ENCODE measurements at regions of chr18 and their contacts with region 1.

Region 1: DNA sequence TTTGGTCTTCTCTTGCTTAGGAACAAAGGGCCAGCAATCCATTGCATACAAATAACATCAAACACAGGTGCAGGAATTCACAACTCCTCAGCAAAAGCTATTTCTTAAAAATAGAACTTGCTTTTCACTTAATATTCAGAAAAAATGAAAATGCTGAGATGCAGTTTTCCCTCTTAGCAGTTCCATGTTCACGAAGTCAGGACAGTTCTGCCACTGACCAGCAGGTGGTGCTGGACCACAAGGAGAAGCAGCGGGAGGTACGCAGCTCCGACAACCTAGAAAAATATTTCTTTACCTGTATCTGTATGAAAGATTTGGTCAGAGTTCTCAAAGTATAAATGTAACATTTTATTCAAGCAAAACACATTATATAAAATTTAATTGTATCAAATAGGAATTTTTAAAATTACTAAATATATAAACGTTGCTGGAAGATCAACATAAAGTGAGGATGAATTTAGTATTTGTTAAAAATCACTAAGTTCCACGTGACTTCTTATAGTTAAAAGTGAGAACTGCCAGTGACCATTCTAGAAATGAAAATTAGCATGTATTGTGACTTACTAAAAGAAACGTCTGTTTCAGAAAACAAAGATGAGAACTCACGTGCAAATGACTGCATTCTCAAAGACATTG is 48.8 kb downstream of the ADNP2 start:
- DNase-seq: peak; percentile 51
- H3K4me3 ChIP-seq: no peak overlapping the region
- H3K27ac ChIP-seq: no peak overlapping the region
- H3K27me3 ChIP-seq: no peaks in the 10 kb centered on the region
- CTCF ChIP-seq: peak; percentile 97

Region 2: DNA sequence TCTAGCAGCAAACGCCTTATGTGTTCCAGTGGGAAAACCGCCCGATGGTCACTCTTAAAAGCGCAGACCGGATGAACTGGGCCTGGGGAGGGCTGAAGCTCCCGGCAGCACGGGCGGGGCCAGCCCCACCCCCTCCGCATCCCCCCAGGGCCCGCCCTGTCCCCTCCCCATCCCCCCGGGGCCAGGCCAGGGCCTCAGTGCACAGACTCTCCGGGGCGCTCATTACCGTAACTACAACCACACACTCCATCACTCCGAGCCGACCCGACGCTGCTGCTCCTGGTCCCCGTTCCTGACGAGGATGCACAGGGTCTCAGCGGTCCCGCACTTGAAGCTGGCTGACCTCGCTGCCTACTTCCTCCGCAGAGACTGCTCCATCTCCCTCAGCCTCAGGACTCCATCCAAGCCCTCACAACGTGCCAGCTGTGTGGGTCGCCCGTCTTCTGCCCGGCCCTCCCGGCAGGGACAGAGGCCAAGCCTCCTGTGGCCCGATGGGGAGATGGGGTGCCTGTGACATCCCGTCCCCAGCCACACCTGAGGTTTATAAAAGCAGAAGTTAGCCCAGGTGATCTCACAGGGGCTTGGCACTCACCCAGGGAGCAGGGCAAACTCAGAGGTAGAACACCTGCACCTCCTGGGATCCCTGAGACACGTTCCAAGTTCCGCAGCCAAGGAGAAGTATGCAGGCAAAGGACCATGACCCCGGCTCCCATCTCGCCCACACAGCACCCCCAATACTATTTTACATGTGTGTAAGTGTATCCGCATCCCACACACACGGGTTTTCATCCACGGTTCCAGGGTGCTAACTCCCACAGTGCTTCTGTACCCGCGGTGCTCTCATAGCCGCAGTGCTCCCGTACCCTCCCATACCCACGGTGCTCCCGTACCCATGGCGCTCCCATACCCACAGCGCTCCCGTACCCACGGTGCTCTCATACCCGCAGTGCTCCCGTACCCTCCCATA is 242.4 kb before region 1 on chr18:
- CTCF ChIA-PET with region 1: no interaction called
- POLR2A ChIA-PET with region 1: no interaction called
- DNase-seq: no peak
- H3K4me3 ChIP-seq: no peak overlapping the region
- H3K27ac ChIP-seq: no peak overlapping the region
- H3K27me3 ChIP-seq: no peaks in the 10 kb centered on the region
- CTCF ChIP-seq: no peak

Region 3: DNA sequence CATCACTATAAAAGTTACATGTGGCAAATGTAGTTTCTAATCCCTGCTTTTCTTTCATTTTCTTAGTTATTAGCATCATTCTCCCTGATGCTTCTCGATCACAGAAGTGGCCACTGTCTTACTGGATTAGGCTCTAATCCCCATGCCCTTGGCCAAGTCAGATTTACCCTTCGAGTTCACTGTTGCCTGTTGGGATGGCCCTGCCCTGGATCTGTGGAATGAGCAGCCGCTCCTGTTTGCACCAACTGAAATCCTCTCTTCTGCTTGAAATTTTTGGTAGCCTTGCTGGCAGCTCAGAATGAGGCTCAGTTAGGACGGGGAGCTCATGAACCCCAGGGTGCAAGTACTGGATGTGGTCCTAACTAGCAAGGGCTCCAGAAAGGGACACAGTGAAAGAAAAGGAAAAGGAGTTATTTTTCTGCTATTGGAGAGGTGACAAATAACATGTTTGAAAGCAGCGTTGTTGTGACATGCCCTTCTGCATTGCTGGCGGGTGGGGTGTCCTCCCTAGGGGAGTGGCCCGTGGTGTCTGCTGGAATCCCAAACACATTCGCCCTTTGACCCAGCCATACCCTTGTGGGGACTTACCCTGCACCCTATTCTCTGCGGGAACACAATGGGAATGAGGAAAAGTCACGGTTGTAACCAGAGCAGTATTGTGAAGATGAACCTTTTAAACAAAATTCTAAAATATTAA is 89.1 kb before region 1 on chr18:
- CTCF ChIA-PET with region 1: no interaction called
- POLR2A ChIA-PET with region 1: no interaction called
- DNase-seq: no peak
- H3K4me3 ChIP-seq: no peak overlapping the region
- H3K27ac ChIP-seq: no peak overlapping the region
- H3K27me3 ChIP-seq: no peaks in the 10 kb centered on the region
- CTCF ChIP-seq: no peak

Region 4: DNA sequence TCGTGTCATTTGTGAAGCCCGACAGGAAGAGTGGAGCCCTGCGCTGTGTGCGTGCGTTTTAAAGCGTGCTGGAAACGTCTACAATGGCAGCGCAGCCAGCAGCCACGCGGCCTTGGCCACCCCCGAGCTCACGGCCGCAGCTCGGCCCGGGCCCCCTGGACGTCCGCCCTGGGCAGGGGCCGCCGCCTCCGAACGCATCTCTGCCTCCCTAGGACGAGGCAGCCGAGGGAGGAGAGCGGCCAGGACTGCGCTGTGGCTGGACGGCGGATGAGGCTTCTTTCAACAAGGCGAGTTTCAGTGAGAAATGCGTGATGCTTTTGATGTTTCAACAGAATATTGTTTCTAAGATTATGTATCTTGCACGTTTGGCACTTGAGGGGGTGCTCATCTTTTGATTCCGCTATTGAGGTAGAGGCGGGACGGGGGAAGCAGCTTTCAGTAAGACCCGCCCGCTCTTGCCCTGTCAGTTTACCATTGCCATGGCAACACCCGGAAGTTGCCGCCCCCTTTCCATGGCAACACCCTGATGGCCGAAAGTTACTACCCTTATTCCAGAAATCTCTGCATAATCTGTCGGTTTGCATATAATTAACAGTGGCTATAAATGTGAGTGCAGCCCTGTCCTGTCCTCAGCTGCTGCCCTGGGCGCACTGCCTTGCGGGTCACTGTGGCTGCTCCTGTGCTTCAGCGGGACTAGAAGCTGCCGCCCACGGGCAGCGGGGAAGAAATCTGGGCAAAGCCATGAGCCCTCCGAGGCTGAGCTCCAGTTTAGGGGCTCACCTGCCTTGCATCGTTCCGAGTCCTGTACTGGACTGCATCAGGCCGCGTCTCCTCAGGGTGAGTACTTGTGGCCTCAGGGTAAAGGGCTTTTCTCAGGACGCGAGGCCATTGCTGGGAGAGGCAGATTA is 10.2 kb before region 1 on chr18:
- CTCF ChIA-PET with region 1: interaction called, 31 read pairs
- POLR2A ChIA-PET with region 1: interaction called, 3 read pairs
- DNase-seq: peak; percentile 38
- H3K4me3 ChIP-seq: peak overlapping the region; percentile 78
- H3K27ac ChIP-seq: no peak overlapping the region
- H3K27me3 ChIP-seq: no peaks in the 10 kb centered on the region
- CTCF ChIP-seq: no peak

Region 5: GRCh38 chr18:80171054-80171872 is 13.4 kb after region 1 on chr18:
- CTCF ChIA-PET with region 1: interaction called, 29 read pairs
- POLR2A ChIA-PET with region 1: no interaction called
- DNase-seq: peak; percentile 24
- H3K4me3 ChIP-seq: peak overlapping the region; percentile 27; the same call in 1 of the 2 replicates
- H3K27ac ChIP-seq: peak overlapping the region; percentile 11
- H3K27me3 ChIP-seq: no peaks in the 10 kb centered on the region
- CTCF ChIP-seq: peak; percentile 80

Region 6: GRCh38 chr18:80247403-80247916 is 89.6 kb after region 1 on chr18 and contains the start of gene PARD6G:
- CTCF ChIA-PET with region 1: interaction called, 14 read pairs
- POLR2A ChIA-PET with region 1: no interaction called
- DNase-seq: peak; percentile 20
- H3K4me3 ChIP-seq: peak within 1 kb of the TSS; percentile 73
- H3K27ac ChIP-seq: no peak within 1 kb of the TSS
- H3K27me3 ChIP-seq: peaks cover 3% of the 10 kb centered on the region
- CTCF ChIP-seq: peak; percentile 27; the same call in 1 of the 2 replicates
- polyA plus RNA-seq, gene PARD6G: 9.6 and 11.2 TPM in 2 replicates

Region 7: GRCh38 chr18:80254971-80255500 is 97.2 kb after region 1 on chr18:
- CTCF ChIA-PET with region 1: interaction called, 27 read pairs
- POLR2A ChIA-PET with region 1: no interaction called
- DNase-seq: no peak
- H3K4me3 ChIP-seq: no peak overlapping the region
- H3K27ac ChIP-seq: no peak overlapping the region
- H3K27me3 ChIP-seq: peaks cover 3% of the 10 kb centered on the region
- CTCF ChIP-seq: no peak

Measured in AG04450 (cell line).